Activated CD4-positive, alpha-beta memory T cell treated with anti-CD3 and anti-CD28 coated beads for 36 hours (primary cell): ENCODE measurements at regions of chr1 and their contacts with region 1.

Region 1: DNA sequence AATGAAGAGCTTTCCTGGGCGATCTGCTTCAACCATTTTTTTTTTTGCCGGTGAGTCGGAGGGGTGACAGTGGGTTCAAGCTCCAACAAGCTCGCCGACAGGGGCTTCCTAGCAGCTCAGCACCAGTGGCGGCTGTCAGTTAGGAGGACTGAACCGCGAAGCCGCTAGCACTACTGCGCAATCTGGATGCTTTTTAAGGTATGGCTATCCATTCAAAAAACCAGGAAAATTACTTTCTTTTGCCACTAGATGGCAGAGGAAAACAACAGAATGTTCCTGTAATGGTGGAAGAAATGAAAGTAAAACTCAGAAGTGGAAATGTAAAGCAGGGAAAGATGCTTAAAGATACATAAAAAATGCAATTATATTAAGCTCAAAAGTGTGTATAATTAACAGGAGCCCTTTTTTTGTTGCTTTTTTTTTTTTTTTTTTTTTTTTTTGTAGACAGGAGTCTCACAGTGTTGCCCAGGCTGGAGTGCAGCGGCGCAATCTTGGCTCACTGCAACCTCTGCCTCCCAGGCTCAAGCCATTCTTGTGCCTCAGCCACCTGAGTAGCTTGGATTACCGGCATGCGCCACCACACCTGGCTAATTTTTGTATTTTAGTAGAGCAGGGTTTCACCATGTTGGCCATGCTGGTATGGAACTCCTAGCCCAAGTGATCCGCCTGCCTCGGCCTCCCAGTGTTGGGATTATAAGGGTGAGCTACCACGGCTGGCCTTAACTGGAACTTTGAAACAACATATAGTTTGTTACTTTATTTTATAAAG is 8.5 kb downstream of the KYAT3 start:
- DNase-seq: peak; percentile 41
- H3K4me3 Mint-ChIP-seq: peak overlapping the region; percentile 17
- H3K27ac Mint-ChIP-seq: peak overlapping the region; percentile 80
- H3K4me1 Mint-ChIP-seq: peaks cover 87% of the 10 kb centered on the region
- H3K27me3 Mint-ChIP-seq: no peaks in the 10 kb centered on the region

Region 2: DNA sequence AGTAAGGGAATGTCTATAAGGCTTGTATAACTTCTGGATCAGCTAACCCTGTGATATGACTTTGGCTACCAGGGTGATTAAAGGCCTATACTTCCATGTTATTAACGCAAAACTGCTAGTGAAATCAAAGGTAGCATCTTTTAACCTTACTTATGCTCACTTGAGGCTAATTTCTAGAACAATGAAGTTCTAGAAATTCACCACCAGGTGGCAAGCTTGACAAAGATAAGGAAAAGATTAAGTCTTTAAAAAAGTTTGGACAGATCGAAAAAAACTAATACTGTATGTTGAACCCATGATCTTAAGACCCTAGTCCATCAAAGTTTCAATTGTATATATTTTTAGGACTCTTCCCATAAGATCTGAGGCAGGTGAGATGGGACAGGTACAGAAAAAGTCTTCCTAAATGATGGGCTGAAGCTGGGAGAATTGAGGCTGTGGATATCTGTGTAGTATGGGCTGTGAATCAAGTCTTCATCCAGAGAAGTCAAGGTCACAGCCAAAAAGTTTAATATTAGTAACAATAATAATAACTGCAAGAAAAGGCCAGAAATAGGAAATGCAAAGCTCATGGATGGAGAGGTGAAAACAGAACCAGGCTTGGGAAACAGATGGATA is 10.3 kb before region 1 on chr1:
- CTCF ChIA-PET with region 1: interaction called, 26 read pairs
- POLR2A ChIA-PET with region 1: no interaction called
- intact Hi-C with region 1: loop called (anchors 1 kb)
- DNase-seq: no peak
- H3K4me3 Mint-ChIP-seq: no peak overlapping the region
- H3K27ac Mint-ChIP-seq: no peak overlapping the region
- H3K4me1 Mint-ChIP-seq: peaks cover 28% of the 10 kb centered on the region
- H3K27me3 Mint-ChIP-seq: no peaks in the 10 kb centered on the region

Region 3: GRCh38 chr1:88998716-88999115 is 14.7 kb after region 1 on chr1:
- CTCF ChIA-PET with region 1: interaction called, 11 read pairs
- POLR2A ChIA-PET with region 1: no interaction called
- intact Hi-C with region 1: no loop called
- DNase-seq: no peak
- H3K4me3 Mint-ChIP-seq: no peak overlapping the region
- H3K27ac Mint-ChIP-seq: no peak overlapping the region
- H3K4me1 Mint-ChIP-seq: peaks cover 27% of the 10 kb centered on the region
- H3K27me3 Mint-ChIP-seq: no peaks in the 10 kb centered on the region

Region 4: GRCh38 chr1:89022167-89022959 is 38.4 kb after region 1 on chr1 and contains the start of gene GBP3:
- CTCF ChIA-PET with region 1: interaction called, 12 read pairs
- POLR2A ChIA-PET with region 1: no interaction called
- intact Hi-C with region 1: loop called (anchors 2 kb)
- DNase-seq: no peak
- H3K4me3 Mint-ChIP-seq: peak within 1 kb of the TSS; percentile 76
- H3K27ac Mint-ChIP-seq: peak within 1 kb of the TSS; percentile 69
- H3K4me1 Mint-ChIP-seq: peaks cover 52% of the 10 kb centered on the region
- H3K27me3 Mint-ChIP-seq: peaks cover 2% of the 10 kb centered on the region
- total RNA-seq, gene GBP3: 4.5 to 5.7 TPM